Endothelial cell of umbilical vein (primary cell): ENCODE measurements at regions of chr17 and their contacts with region 1.

Region 1: DNA sequence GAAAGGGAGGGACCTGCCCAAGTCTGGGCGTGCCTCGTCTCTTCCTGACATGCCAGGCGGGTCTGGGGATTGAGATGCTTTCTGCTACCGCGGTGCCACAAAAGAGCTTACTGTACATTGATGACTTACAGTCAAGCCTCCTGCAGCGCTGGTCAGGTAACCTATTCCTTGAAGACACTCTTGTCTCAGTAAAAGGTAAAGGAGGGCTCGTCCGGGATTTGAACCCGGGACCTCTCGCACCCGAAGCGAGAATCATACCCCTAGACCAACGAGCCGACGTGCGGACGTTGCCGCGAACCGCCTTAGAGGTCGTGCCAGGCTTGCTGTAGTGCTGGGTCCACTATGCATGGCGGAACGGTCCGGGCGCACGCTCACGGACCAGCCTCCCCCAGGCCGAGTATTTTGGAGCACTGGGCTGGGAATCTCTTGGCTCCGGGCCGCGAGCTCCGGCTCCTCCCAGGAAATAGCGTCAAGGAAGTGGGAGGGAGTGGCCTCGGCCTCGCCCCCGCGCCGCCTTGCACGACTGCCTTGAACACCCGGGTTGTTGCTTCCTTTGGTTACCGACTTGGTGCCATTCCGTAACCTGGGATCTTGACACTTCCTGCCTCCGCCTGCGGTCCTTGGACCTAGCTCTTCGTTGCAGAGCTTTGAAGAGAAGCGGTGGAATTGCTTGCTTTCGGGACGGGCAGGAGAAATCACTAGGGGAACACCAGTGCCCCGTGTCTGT is 12.4 kb upstream of the AURKB start:
- DNase-seq: peak; percentile 95
- H3K4me3 ChIP-seq: peak overlapping the region in 2 of 3 experiments; percentile 41 to 66
- H3K27ac ChIP-seq: peak overlapping the region; percentile 90
- H3K4me1 ChIP-seq: peaks cover 9% of the 10 kb centered on the region
- H3K27me3 ChIP-seq: no peaks in the 10 kb centered on the region
- CTCF ChIP-seq: no peak
- POLR2A ChIP-seq: peak; percentile 65

Region 2: DNA sequence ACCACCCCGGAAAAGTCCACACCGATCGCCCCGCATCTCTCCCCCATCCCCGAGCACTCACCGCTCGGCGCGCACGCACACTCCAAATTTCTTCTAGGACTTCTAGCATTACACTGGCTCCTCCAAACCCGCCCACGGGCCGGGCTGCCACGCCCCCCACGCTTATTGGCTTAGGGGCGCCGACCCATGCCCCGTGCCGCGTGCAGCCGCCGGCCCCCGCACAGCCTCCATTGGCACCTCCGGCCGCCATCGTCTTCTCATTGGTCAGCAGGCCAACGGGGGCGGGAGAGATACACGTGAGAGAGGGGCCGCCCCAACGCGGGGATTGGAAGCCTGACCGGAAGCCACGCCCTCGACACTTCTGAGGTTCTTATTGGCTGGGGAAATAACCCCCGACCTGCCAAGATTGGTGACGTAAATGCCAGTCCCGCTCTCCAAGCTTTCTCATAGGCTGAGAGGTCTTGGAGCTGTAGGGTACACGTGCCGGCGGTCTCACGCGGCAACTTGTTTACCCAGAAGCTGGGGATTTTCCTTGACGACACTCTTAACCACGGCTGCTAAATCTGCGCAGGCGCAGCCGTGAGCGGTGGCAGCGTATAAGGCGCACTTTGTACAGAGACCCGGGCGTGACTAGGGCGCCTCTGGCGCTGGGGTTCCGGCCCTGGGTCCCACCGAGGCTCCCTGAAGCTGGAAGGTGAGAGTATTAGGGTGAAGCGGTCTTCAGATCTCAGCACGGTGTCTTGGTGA is 66.4 kb before region 1 on chr17:
- CTCF ChIA-PET with region 1: no interaction called
- POLR2A ChIA-PET with region 1: no interaction called
- dilution Hi-C with region 1: no loop called
- intact Hi-C with region 1: loop called (anchors 2 kb)
- DNase-seq: peak; percentile 100
- H3K4me3 ChIP-seq: peak overlapping the region in 2 of 3 experiments; percentile 24 to 62
- H3K27ac ChIP-seq: peak overlapping the region; percentile 99
- H3K4me1 ChIP-seq: peaks cover 43% of the 10 kb centered on the region
- H3K27me3 ChIP-seq: no peaks in the 10 kb centered on the region
- CTCF ChIP-seq: no peak
- POLR2A ChIP-seq: no peak

Region 3: DNA sequence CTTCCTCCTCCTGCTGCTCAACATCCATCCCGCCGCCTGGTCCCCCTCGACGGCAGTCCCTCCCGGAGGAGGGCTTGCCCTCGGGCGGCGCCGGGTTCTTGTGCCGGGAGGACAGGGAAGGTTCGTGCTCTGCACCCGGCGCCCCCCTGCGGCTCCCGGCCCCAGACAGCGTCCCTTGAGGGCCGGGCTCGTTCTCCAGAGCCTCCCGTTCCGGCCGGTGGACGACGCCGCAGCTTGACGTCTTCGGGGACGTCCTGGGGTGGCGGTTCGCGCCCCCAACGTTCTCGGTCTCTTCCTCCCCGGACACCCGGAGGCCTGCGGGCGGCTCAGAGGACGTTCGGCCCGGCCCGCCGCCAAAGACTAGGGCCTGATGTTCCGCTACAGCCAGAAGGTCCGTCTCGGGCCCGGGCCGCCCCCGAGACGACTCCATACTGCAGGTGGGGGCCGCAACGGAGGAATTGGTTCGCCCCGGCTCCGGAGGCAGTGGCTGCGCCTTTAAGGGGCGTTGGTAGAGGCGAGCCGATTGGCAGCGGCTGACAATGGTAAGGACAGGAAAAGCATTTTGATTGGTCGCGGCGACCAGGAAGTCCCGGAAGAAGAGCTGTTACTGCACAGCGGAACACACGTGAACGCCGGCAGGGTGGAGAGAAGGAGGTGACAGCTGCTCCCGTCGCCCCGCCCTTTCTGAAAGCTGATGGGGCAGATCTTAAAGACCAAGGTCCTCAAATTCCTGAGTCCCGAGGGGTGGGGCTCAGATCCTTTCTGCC is 32.9 kb before region 1 on chr17 and contains the start of gene BORCS6:
- CTCF ChIA-PET with region 1: interaction called, 34 read pairs
- POLR2A ChIA-PET with region 1: interaction called, 8 read pairs
- dilution Hi-C with region 1: no loop called
- intact Hi-C with region 1: loop called (anchors 1 kb)
- DNase-seq: peak; percentile 98
- H3K4me3 ChIP-seq: peak within 1 kb of the TSS; percentile 45 to 66 (median 49)
- H3K27ac ChIP-seq: peak within 1 kb of the TSS; percentile 65
- H3K4me1 ChIP-seq: peaks cover 27% of the 10 kb centered on the region
- H3K27me3 ChIP-seq: no peaks in the 10 kb centered on the region
- CTCF ChIP-seq: peak in 1 of 2 donors; percentile 5
- POLR2A ChIP-seq: no peak
- total RNA-seq, gene BORCS6: 8.3 and 9.0 TPM in 2 replicates

Region 4: GRCh38 chr17:8209909-8210760 is 12.7 kb before region 1 on chr17 and contains the start of gene AURKB:
- CTCF ChIA-PET with region 1: interaction called, 10 read pairs
- POLR2A ChIA-PET with region 1: interaction called, 14 read pairs
- dilution Hi-C with region 1: no loop called
- intact Hi-C with region 1: loop called (anchors 1 kb)
- DNase-seq: peak; percentile 94
- H3K4me3 ChIP-seq: peak within 1 kb of the TSS; percentile 39 to 78 (median 77)
- H3K27ac ChIP-seq: peak within 1 kb of the TSS; percentile 62
- H3K4me1 ChIP-seq: peaks cover 13% of the 10 kb centered on the region
- H3K27me3 ChIP-seq: no peaks in the 10 kb centered on the region
- CTCF ChIP-seq: no peak
- POLR2A ChIP-seq: peak; percentile 73
- total RNA-seq, gene AURKB: 104 and 107 TPM in 2 replicates

Region 5: GRCh38 chr17:8300627-8301242 is 77.9 kb after region 1 on chr17:
- CTCF ChIA-PET with region 1: interaction called, 8 read pairs
- POLR2A ChIA-PET with region 1: no interaction called
- dilution Hi-C with region 1: no loop called
- intact Hi-C with region 1: loop called (anchors 2 kb)
- DNase-seq: peak; percentile 58
- H3K4me3 ChIP-seq: no peak overlapping the region
- H3K27ac ChIP-seq: no peak overlapping the region
- H3K4me1 ChIP-seq: no peaks in the 10 kb centered on the region
- H3K27me3 ChIP-seq: no peaks in the 10 kb centered on the region
- CTCF ChIP-seq: peak; percentile 80 to 89
- POLR2A ChIP-seq: no peak